CD8-positive, alpha-beta T cell (primary cell): ENCODE measurements at regions of chr15 and their contacts with region 1.

Region 1: GRCh38 chr15:40754883-40755811 is at the start of gene RMDN3:
- DNase-seq: peak; percentile 84 to 96 (median 93)
- ATAC-seq: peak; percentile 95
- H3K4me3 ChIP-seq: peak within 1 kb of the TSS; percentile 99
- H3K4me3 Mint-ChIP-seq: peak within 1 kb of the TSS; percentile 94
- H3K27ac ChIP-seq: peak within 1 kb of the TSS; percentile 91 to 94
- H3K27ac Mint-ChIP-seq: peak within 1 kb of the TSS; percentile 94
- H3K4me1 ChIP-seq: peaks cover 6% of the 10 kb centered on the region
- H3K4me1 Mint-ChIP-seq: peaks cover 26% of the 10 kb centered on the region
- H3K27me3 ChIP-seq: no peaks in the 10 kb centered on the region
- H3K27me3 Mint-ChIP-seq: no peaks in the 10 kb centered on the region
- CTCF ChIP-seq: no peak
- total RNA-seq, gene RMDN3: 26.7 to 30.5 TPM

Region 2: GRCh38 chr15:40564591-40565332 is 190.4 kb before region 1 on chr15 and contains the start of gene CCDC32:
- CTCF ChIA-PET with region 1: no interaction called
- POLR2A ChIA-PET with region 1: no interaction called
- intact Hi-C with region 1: loop called (anchors 1 to 2 kb)
- DNase-seq: peak; percentile 84 to 99 (median 94)
- ATAC-seq: peak; percentile 90
- H3K4me3 ChIP-seq: peak within 1 kb of the TSS; percentile 89 to 97
- H3K4me3 Mint-ChIP-seq: peak within 1 kb of the TSS; percentile 95
- H3K27ac ChIP-seq: peak within 1 kb of the TSS; percentile 87 to 97
- H3K27ac Mint-ChIP-seq: peak within 1 kb of the TSS; percentile 97
- H3K4me1 ChIP-seq: peaks cover 11% of the 10 kb centered on the region
- H3K4me1 Mint-ChIP-seq: peaks cover 52% of the 10 kb centered on the region
- H3K27me3 ChIP-seq: no peaks in the 10 kb centered on the region
- H3K27me3 Mint-ChIP-seq: no peaks in the 10 kb centered on the region
- CTCF ChIP-seq: no peak
- total RNA-seq, gene CCDC32: 18.3 to 20.3 TPM

Region 3: GRCh38 chr15:40743921-40744814 is 11.0 kb before region 1 on chr15:
- CTCF ChIA-PET with region 1: interaction called, 4 read pairs
- POLR2A ChIA-PET with region 1: interaction called, 4 read pairs
- intact Hi-C with region 1: loop called (anchors 1 kb)
- DNase-seq: peak; percentile 23 to 92 (median 69)
- ATAC-seq: peak; percentile 92
- H3K4me3 ChIP-seq: peak overlapping the region in 1 of 2 experiments; percentile 5
- H3K4me3 Mint-ChIP-seq: no peak overlapping the region
- H3K27ac ChIP-seq: peak overlapping the region; percentile 29 to 95
- H3K27ac Mint-ChIP-seq: peak overlapping the region; percentile 96
- H3K4me1 ChIP-seq: peaks cover 5% of the 10 kb centered on the region
- H3K4me1 Mint-ChIP-seq: peaks cover 16% of the 10 kb centered on the region
- H3K27me3 ChIP-seq: no peaks in the 10 kb centered on the region
- H3K27me3 Mint-ChIP-seq: no peaks in the 10 kb centered on the region
- CTCF ChIP-seq: no peak

Region 4: GRCh38 chr15:40769274-40770146 is 14.4 kb after region 1 on chr15 and contains the start of gene C15orf62:
- CTCF ChIA-PET with region 1: interaction called, 4 read pairs
- POLR2A ChIA-PET with region 1: no interaction called
- intact Hi-C with region 1: loop called (anchors 2 kb)
- DNase-seq: peak in 8 of 9 experiments; percentile 44 to 82 (median 70)
- ATAC-seq: peak; percentile 58
- H3K4me3 ChIP-seq: peak within 1 kb of the TSS in 1 of 2 experiments; percentile 19
- H3K4me3 Mint-ChIP-seq: peak within 1 kb of the TSS; percentile 69
- H3K27ac ChIP-seq: peak within 1 kb of the TSS; percentile 35 to 66
- H3K27ac Mint-ChIP-seq: peak within 1 kb of the TSS; percentile 94
- H3K4me1 ChIP-seq: peaks cover 39% of the 10 kb centered on the region
- H3K4me1 Mint-ChIP-seq: peaks cover 41% of the 10 kb centered on the region
- H3K27me3 ChIP-seq: no peaks in the 10 kb centered on the region
- H3K27me3 Mint-ChIP-seq: no peaks in the 10 kb centered on the region
- CTCF ChIP-seq: no peak
- total RNA-seq, gene C15orf62: 1.0 to 1.1 TPM